Heart right ventricle (tissue), 16 donors: ENCODE measurements at regions of chr1 and their contacts with region 1.

Region 1: GRCh38 chr1:164475834-164476233 is 83.2 kb upstream of the PBX1 start:
- DNase-seq: no peak
- ATAC-seq: no peak
- H3K4me3 ChIP-seq: no peak overlapping the region
- H3K27ac ChIP-seq: no peak overlapping the region
- H3K4me1 ChIP-seq: peaks cover 0 to 24% (median 4%) of the 10 kb centered on the region in 9 donors
- H3K27me3 ChIP-seq: no peaks in the 10 kb centered on the region
- CTCF ChIP-seq: no peak

Region 2: DNA sequence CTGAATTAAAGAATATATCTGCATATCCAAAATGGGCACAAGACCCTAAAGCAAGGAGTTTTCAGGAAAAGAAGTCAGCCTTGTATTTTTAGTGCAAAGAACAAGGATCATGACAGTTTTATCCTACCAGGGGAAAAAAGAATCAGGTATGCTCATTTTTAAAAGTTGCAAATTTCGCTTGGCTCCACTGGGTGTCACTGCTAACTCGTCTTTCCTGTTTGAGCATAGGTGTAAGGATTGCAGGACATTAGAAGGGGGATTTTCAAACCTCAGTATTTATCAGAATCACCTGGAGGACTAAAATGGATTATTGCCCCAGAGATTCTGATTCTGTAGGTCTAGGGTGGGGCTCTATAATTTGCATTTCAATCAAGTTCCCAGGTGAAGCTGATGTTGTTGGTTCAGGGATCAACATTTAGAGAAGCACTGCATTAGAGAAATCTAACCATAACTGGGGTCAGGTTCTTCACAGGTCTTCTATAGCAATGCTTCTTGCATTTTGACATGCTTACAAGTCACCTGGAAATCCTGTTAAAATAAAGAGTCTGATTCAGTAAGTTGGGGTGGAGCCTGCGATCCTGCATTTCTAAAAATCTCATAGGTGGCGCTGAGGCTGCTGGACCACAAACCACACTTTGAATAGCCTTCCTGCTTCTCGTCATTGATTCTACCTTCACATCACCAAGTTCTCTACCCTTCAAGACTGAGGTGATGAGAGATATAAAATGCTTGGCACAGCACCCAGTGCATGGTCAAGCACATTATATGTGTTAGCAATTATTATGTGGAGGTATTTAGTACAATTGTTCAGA is 1114.5 kb before region 1 on chr1:
- intact Hi-C with region 1: loop called in 1 of 10 experiments (anchors 5 kb)
- DNase-seq: no peak
- ATAC-seq: no peak
- H3K4me3 ChIP-seq: no peak overlapping the region
- H3K27ac ChIP-seq: no peak overlapping the region
- H3K4me1 ChIP-seq: peaks cover 0 to 4% (median 0%) of the 10 kb centered on the region in 9 donors
- H3K27me3 ChIP-seq: peaks cover 0 to 5% (median 0%) of the 10 kb centered on the region in 7 donors
- CTCF ChIP-seq: peak in 6 of 9 donors; percentile 24 to 55 (median 44)

Region 3: GRCh38 chr1:163980391-163980790 is 495.4 kb before region 1 on chr1:
- intact Hi-C with region 1: no loop called
- DNase-seq: no peak
- ATAC-seq: no peak
- H3K4me3 ChIP-seq: no peak overlapping the region
- H3K27ac ChIP-seq: no peak overlapping the region
- H3K4me1 ChIP-seq: no peaks in the 10 kb centered on the region
- H3K27me3 ChIP-seq: no peaks in the 10 kb centered on the region
- CTCF ChIP-seq: no peak

Region 4: GRCh38 chr1:164155347-164155746 is 320.5 kb before region 1 on chr1:
- intact Hi-C with region 1: no loop called
- DNase-seq: no peak
- ATAC-seq: no peak
- H3K4me3 ChIP-seq: no peak overlapping the region
- H3K27ac ChIP-seq: no peak overlapping the region
- H3K4me1 ChIP-seq: no peaks in the 10 kb centered on the region
- H3K27me3 ChIP-seq: no peaks in the 10 kb centered on the region
- CTCF ChIP-seq: no peak

Region 5: GRCh38 chr1:164423136-164423535 is 52.7 kb before region 1 on chr1:
- intact Hi-C with region 1: no loop called
- DNase-seq: no peak
- ATAC-seq: no peak
- H3K4me3 ChIP-seq: no peak overlapping the region
- H3K27ac ChIP-seq: no peak overlapping the region
- H3K4me1 ChIP-seq: no peaks in the 10 kb centered on the region
- H3K27me3 ChIP-seq: no peaks in the 10 kb centered on the region
- CTCF ChIP-seq: no peak

Region 6: GRCh38 chr1:164772635-164773034 is 296.8 kb after region 1 on chr1:
- intact Hi-C with region 1: no loop called
- DNase-seq: peak; percentile 45 to 55
- ATAC-seq: peak; percentile 66 to 94 (median 86)
- H3K4me3 ChIP-seq: no peak overlapping the region
- H3K27ac ChIP-seq: peak overlapping the region in 9 of 10 donors; percentile 1 to 73 (median 57)
- H3K4me1 ChIP-seq: peaks cover 9 to 77% (median 48%) of the 10 kb centered on the region in 9 donors
- H3K27me3 ChIP-seq: no peaks in the 10 kb centered on the region
- CTCF ChIP-seq: no peak